Posterior vena cava (tissue), 2 donors: ENCODE measurements at regions of chr18 and their contacts with region 1.

Region 1: DNA sequence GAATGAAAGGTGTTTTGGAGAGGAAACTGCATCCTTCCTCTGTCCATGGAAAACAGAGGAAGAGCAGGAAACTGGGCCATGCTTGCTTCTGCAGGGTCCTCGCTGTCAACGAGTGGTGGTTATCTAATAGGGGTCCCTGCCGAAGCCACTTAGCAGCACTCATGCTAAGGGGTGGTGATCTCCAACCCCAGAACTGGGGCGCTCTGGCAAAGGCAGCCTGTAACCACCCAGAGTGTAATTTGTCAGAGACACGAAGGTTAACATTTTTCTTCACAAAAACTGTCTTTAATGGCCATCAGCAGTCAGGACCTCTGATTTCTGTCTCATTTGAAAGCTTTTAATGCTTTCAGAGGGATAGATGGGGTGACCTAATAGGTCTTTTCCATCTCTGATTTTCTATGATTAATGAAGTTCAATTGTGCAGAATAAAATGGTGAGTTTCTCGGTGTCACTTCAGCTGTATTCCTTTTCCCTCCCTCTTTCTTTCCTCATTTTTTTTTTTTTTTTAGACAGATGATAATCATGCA is 231.3 kb upstream of the CELF4 start:
- DNase-seq: no peak

Region 2: DNA sequence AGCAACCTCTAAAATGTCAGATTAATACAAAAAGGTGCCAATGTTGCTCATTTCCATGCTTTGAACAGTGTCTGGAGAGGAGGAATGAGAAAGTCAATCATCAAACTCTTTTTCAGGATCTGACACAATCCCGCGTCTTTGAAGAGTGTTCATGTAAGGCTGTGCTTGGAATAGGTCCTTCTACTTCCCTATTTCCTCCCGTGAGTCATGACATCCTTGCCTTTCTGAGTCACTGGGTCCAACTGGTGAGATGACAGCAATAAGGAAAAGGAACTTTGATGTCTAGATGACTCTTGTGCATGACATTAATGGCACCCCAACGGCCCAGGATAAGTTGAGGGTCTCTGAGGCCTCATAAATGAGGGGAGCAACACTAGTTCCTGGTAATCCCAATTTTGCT is 122.3 kb before region 1 on chr18:
- intact Hi-C with region 1: no loop called
- DNase-seq: no peak

Region 3: DNA sequence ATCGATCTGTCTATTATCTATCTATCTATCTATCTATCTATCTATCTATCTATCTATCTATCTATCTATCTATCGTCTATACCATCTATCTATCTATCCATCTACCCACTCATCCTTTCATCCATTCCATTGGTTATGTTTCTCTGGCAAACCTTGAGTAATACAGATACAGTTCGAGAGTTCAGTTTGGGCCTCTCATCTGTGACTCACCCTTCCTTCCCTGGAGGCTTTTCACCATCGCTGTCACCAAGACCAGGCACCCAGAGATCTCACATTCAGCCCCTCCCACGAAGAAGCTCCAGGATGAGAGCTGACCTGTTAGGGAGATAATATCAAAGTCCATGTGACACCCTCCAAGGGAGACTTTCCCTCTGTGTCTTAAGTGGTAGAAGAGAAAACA is 67.2 kb before region 1 on chr18:
- intact Hi-C with region 1: loop called in 1 of 2 experiments (anchors 10 kb)
- DNase-seq: no peak